Activated naive CD4-positive, alpha-beta T cell treated with anti-CD3 and anti-CD28 coated beads for 36 hours (primary cell): ENCODE measurements at regions of chr12 and their contacts with region 1.

Region 1: GRCh38 chr12:109518820-109519665 is 41.6 kb downstream of the UBE3B start:
- DNase-seq: peak; percentile 77
- H3K4me3 Mint-ChIP-seq: no peak overlapping the region
- H3K27ac Mint-ChIP-seq: no peak overlapping the region
- H3K4me1 Mint-ChIP-seq: no peaks in the 10 kb centered on the region
- H3K27me3 Mint-ChIP-seq: no peaks in the 10 kb centered on the region

Region 2: DNA sequence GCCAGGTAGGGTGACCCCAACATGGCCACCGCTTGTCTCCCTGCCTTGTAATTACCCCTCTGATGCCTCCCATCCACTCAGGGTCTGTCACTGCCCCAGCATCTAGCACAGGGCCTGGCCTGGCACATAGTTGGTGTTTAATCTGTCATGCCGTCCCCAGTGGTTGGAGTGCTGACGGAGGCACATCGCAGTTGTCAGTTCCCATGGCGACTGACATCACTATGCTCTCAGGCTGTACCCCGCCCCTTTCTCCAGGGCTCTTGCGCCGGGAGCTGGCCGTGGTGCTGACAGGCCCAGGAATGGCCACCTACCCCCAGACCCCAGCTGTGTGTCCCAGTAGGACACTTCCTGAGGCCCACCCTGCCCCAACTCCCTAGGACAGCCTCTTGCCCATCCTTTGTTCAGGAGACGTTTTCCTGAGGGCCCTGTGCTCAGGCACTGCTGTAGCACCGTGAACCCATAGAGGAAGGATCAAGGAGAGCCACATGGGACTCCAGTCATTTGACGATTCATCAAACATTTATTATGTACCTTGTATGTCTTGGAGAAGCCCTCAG is 217.6 kb after region 1 on chr12:
- CTCF ChIA-PET with region 1: no interaction called
- intact Hi-C with region 1: no loop called
- DNase-seq: peak; percentile 48
- H3K4me3 Mint-ChIP-seq: no peak overlapping the region
- H3K27ac Mint-ChIP-seq: no peak overlapping the region
- H3K4me1 Mint-ChIP-seq: no peaks in the 10 kb centered on the region
- H3K27me3 Mint-ChIP-seq: peaks cover 22% of the 10 kb centered on the region

Region 3: GRCh38 chr12:109775172-109775881 is 256.3 kb after region 1 on chr12:
- CTCF ChIA-PET with region 1: interaction called, 19 read pairs
- intact Hi-C with region 1: loop called (anchors 1 kb)
- DNase-seq: peak; percentile 84
- H3K4me3 Mint-ChIP-seq: no peak overlapping the region
- H3K27ac Mint-ChIP-seq: no peak overlapping the region
- H3K4me1 Mint-ChIP-seq: peaks cover 9% of the 10 kb centered on the region
- H3K27me3 Mint-ChIP-seq: no peaks in the 10 kb centered on the region

Region 4: GRCh38 chr12:109844983-109845823 is 326.2 kb after region 1 on chr12:
- CTCF ChIA-PET with region 1: interaction called, 3 read pairs
- intact Hi-C with region 1: loop called (anchors 2 kb)
- DNase-seq: peak; percentile 92
- H3K4me3 Mint-ChIP-seq: peak overlapping the region; percentile 30
- H3K27ac Mint-ChIP-seq: no peak overlapping the region
- H3K4me1 Mint-ChIP-seq: peaks cover 2% of the 10 kb centered on the region
- H3K27me3 Mint-ChIP-seq: no peaks in the 10 kb centered on the region

Region 5: GRCh38 chr12:109880016-109880931 is 361.2 kb after region 1 on chr12 and contains the start of gene GLTP:
- CTCF ChIA-PET with region 1: interaction called, 4 read pairs
- intact Hi-C with region 1: loop called (anchors 1 kb)
- DNase-seq: peak; percentile 86
- H3K4me3 Mint-ChIP-seq: peak within 1 kb of the TSS; percentile 93
- H3K27ac Mint-ChIP-seq: peak within 1 kb of the TSS; percentile 66
- H3K4me1 Mint-ChIP-seq: peaks cover 42% of the 10 kb centered on the region
- H3K27me3 Mint-ChIP-seq: no peaks in the 10 kb centered on the region
- total RNA-seq, gene GLTP: 18.1 to 19.9 TPM